Panc1 (cell line): ENCODE measurements at regions of chr20 and their contacts with region 1.

Region 1: GRCh38 chr20:3218307-3218988 is 9.2 kb downstream of the ITPA start:
- DNase-seq: no peak
- ATAC-seq: peak; percentile 72
- H3K4me3 ChIP-seq: no peak overlapping the region
- H3K27ac ChIP-seq: peak overlapping the region; percentile 73
- H3K4me1 ChIP-seq: peaks cover 44% of the 10 kb centered on the region
- H3K27me3 ChIP-seq: no peaks in the 10 kb centered on the region
- CTCF ChIP-seq: peak; percentile 97

Region 2: DNA sequence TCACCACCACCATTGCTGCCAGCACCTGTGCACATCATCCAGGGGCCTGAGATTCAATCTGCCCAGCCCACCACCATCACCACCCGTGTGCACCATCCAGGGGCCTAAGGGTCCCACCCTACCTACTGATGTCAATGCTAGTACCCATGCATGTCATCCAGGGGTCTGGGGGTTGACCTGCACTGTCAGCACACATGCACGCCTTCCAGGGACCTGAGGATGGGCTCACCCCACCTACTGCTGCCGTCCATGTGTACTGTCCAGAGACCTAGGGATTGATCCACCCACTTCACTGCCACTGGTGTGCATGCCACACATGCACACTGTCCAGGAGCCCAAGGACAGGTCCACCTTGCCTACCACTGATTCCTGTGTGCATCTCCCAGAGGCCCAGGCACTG is 159.0 kb before region 1 on chr20:
- CTCF ChIA-PET with region 1: no interaction called
- POLR2A ChIA-PET with region 1: interaction called, 13 read pairs
- in situ Hi-C with region 1: no loop called
- intact Hi-C with region 1: no loop called
- DNase-seq: no peak
- ATAC-seq: no peak
- H3K4me3 ChIP-seq: no peak overlapping the region
- H3K27ac ChIP-seq: no peak overlapping the region
- H3K4me1 ChIP-seq: no peaks in the 10 kb centered on the region
- H3K27me3 ChIP-seq: no peaks in the 10 kb centered on the region
- CTCF ChIP-seq: no peak

Region 3: DNA sequence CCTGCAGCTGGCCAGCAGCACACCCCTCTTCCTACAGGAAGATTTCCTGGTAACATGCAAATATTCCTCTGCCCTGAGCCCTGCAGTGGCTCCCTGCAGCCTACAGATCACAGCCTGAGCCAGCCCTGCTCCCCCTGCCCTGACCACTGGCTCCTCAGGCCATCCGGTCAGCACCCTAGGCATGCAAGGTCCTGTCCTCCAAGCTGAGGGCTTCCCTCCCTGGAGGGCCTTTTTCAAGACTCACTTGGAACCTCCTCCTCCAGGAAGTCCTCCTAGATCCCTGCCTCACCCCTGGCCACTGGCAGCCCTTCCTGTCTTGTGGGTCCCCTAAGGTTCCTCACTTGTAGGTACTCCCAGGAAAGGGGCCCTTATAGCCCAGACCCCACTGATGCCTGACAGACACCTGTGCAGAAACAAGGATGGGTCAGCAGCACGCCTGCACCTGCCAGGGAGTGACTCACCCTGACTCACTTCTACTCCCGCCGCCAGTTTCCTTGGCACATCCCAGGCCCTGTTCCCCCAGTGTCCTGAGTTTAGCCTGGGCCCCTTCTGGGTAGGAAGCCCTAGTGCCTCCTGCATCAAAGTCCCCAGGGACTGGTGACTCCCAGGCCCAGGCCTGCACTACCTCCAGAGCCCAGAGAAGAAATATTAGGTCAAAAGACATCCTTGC is 17.3 kb after region 1 on chr20:
- CTCF ChIA-PET with region 1: interaction called, 8 read pairs
- POLR2A ChIA-PET with region 1: interaction called, 19 read pairs
- in situ Hi-C with region 1: no loop called
- intact Hi-C with region 1: no loop called
- DNase-seq: no peak
- ATAC-seq: peak; percentile 49
- H3K4me3 ChIP-seq: peak overlapping the region in 1 of 2 experiments; percentile 29; a peak in 2 of 4 replicates
- H3K27ac ChIP-seq: peak overlapping the region; percentile 48
- H3K4me1 ChIP-seq: peaks cover 26% of the 10 kb centered on the region
- H3K27me3 ChIP-seq: no peaks in the 10 kb centered on the region
- CTCF ChIP-seq: no peak

Region 4: DNA sequence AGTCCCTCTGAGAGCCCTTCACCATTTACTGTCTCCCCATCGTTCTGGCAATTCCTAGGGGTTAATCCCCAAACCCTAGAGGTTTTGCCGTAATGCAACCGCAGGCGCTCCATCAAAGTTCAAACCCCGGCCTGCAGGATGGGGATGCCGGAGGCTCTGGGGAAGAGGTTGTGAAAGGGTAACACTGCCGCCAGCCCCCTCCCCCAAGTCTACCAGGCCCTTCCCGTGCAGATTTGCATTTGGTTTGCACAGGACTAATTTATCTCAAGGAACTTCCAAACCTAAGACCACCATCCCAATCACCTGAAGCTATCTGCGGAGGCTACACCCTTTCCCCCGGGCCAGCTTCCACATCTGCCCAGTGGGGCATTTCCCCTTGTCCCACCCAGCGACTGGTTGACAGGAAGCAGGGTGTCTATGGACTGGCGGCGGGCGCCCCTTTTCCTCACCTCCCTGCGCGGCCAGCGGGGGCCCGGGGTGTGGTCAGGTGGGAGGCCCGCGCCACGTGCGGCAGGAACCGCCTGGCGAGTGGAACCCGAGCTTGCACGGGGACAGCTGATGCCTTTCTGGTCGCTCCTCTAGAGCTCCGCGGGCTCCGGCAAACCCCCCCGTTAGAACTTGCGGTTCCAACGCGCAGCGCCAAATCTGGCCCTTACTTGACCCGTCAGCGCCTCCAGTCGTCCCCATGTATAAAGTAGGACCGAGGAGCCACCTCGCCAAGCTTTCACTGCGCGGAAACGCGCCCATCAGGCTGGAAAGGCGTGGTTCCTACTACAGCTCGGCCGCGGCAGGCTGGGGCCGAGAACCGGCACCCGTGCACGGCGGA is 29.9 kb after region 1 on chr20:
- CTCF ChIA-PET with region 1: interaction called, 11 read pairs
- POLR2A ChIA-PET with region 1: no interaction called
- in situ Hi-C with region 1: no loop called
- intact Hi-C with region 1: no loop called
- DNase-seq: no peak
- ATAC-seq: peak; percentile 88
- H3K4me3 ChIP-seq: peak overlapping the region; percentile 22 to 47
- H3K27ac ChIP-seq: peak overlapping the region; percentile 60; the same call in 1 of the 2 replicates
- H3K4me1 ChIP-seq: peaks cover 21% of the 10 kb centered on the region
- H3K27me3 ChIP-seq: no peaks in the 10 kb centered on the region
- CTCF ChIP-seq: no peak; the same call in 1 of the 2 replicates

Region 5: DNA sequence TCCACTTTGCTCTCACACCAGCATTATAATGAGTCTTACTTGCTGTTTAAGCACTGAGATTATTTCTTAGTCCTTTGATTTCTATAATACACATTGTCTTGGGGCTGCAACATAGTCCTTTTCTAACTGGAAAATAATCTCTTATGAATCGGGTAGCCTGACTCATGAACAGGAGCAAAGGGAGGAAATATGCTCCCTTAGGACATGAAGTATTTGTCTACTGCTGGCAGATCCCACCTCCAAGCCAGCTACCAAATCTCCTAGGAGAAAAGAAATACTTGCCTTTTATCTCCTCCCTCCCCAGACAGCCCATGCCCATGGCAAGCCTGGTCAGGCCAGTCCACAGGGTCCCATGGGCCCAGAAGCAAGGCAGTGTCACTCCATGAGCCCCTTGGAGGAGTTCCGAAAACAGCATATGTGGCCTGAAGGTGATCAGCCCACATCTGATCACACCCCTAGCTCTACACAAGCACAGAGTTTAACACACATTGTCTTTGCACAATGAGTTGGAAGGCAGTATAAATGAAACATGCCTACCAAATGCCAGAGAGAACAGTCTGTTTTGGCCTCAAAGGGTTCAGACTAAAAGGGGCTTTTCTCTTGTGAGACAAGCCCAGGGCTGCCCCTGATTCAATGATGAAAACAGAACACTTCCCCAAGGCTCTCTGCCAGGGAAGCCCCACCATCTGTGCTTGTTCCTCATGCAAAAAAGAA is 57.7 kb after region 1 on chr20:
- CTCF ChIA-PET with region 1: interaction called, 18 read pairs
- POLR2A ChIA-PET with region 1: no interaction called
- in situ Hi-C with region 1: no loop called
- intact Hi-C with region 1: no loop called
- DNase-seq: no peak
- ATAC-seq: 0 out of 2 replicates have a peak, but pooled peaks have one; percentile 31
- H3K4me3 ChIP-seq: no peak overlapping the region
- H3K27ac ChIP-seq: no peak overlapping the region
- H3K4me1 ChIP-seq: no peaks in the 10 kb centered on the region
- H3K27me3 ChIP-seq: no peaks in the 10 kb centered on the region
- CTCF ChIP-seq: no peak

Region 6: GRCh38 chr20:3307078-3307477 is 88.6 kb after region 1 on chr20:
- CTCF ChIA-PET with region 1: no interaction called
- POLR2A ChIA-PET with region 1: interaction called, 10 read pairs
- in situ Hi-C with region 1: no loop called
- intact Hi-C with region 1: loop called (anchors 5 kb)
- DNase-seq: no peak
- ATAC-seq: no peak
- H3K4me3 ChIP-seq: no peak overlapping the region
- H3K27ac ChIP-seq: no peak overlapping the region
- H3K4me1 ChIP-seq: no peaks in the 10 kb centered on the region
- H3K27me3 ChIP-seq: no peaks in the 10 kb centered on the region
- CTCF ChIP-seq: no peak

Region 7: DNA sequence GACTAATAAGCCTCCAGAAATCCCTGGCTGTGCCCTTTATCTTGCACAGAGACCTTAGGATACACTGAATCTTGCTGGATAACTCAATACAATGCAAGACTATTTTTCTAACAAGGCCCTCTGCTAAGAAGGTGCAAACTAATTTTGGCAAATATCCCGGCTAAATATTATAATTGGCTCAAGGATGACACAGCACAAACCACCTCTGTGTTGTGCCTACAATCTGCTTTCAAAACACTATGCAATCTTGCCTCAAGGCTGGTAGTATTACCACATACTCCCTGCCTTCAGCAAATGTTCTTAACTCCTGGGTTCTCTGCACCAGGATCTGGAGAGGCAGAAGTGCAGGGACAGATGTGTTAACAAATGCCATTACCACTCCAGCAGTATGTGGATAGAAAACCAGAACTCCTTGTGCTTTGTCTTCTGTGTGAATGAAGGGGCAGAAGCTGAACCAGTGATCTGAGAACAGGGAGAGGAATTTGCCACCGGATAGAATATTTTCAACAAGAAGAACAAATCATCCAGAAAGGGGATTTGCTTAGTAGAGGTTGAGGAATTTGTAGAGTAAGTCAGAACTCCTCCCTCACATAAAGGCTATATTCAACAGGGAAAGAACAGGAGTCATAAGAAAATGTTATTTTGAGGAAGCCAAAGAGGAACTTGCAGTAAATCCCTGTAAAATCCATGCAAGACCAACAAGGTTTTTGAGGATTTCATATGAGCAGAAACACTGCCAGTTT is 94.7 kb after region 1 on chr20:
- CTCF ChIA-PET with region 1: interaction called, 4 read pairs
- POLR2A ChIA-PET with region 1: no interaction called
- in situ Hi-C with region 1: no loop called
- intact Hi-C with region 1: loop called (anchors 5 kb)
- DNase-seq: no peak
- ATAC-seq: peak; percentile 62; the same call in 1 of the 2 replicates
- H3K4me3 ChIP-seq: no peak overlapping the region
- H3K27ac ChIP-seq: no peak overlapping the region
- H3K4me1 ChIP-seq: no peaks in the 10 kb centered on the region
- H3K27me3 ChIP-seq: no peaks in the 10 kb centered on the region
- CTCF ChIP-seq: no peak